A673 (cell line): ENCODE measurements at regions of chr1 and their contacts with region 1.

Region 1: GRCh38 chr1:75991497-75992114 is 59.4 kb upstream of the ASB17 start:
- DNase-seq: peak; percentile 87
- H3K4me3 ChIP-seq: no peak overlapping the region
- H3K27ac ChIP-seq: no peak overlapping the region
- H3K4me1 ChIP-seq: no peaks in the 10 kb centered on the region
- H3K27me3 ChIP-seq: peaks cover 34% of the 10 kb centered on the region
- CTCF ChIP-seq: peak; percentile 93

Region 2: DNA sequence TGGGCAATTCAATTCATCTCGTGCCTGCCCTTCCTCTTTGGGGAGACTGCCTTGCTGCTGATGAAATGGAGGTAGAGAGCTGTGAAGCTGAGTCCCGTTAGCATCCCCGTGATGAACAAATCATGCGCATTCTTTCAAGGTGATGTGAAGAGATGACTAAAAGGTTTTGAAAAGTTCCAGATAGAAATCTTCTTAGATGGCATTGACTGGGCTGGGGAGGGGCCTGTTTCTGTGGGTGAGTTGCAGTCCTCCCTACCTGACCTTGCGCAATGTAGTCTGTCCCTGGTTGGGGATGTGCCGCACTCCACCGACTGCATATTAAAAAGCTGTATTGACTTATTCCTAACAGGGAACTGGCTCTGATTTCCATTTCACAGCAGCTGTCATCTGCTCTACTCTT is 132.6 kb after region 1 on chr1:
- CTCF ChIA-PET with region 1: no interaction called
- POLR2A ChIA-PET with region 1: no interaction called
- intact Hi-C with region 1: loop called (anchors 10 kb)
- DNase-seq: no peak
- H3K4me3 ChIP-seq: no peak overlapping the region
- H3K27ac ChIP-seq: no peak overlapping the region
- H3K4me1 ChIP-seq: no peaks in the 10 kb centered on the region
- H3K27me3 ChIP-seq: no peaks in the 10 kb centered on the region
- CTCF ChIP-seq: no peak